AG04449 (cell line): ENCODE measurements at regions of chr3 and their contacts with region 1.

Region 1: DNA sequence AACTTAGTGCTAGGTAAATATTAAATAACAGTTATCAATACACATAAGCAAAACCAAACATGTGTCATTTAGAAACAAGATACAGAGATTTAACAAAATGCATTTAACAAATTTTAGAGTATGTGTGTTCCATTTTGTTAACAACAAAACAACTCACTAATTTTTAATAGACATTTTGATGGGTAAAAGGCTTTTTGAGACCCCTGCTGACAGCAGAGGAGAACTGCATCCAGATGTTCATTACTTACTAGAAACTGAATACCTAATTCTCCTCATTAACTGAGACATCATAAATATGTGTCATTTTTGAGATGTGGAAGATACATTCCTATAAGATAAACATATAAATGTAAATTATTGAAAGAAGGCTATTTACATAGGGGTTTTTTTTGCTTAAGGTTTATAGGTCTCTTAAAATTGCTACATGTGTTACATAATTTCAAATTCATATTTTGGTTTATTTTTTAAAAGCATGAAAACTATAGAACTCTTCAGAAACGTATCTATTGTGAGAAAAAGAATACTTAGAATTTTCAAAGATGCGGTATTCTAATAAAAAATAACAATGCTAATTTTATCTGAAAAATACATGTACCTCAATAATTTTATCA is 1009.8 kb downstream of the TUSC7 start:
- DNase-seq: no peak
- H3K4me3 ChIP-seq: no peak overlapping the region
- CTCF ChIP-seq: peak; percentile 51

Region 2: GRCh38 chr3:117708601-117709000 is 10.8 kb before region 1 on chr3:
- CTCF ChIA-PET with region 1: interaction called, 10 read pairs
- POLR2A ChIA-PET with region 1: no interaction called
- DNase-seq: no peak
- H3K4me3 ChIP-seq: no peak overlapping the region
- CTCF ChIP-seq: no peak

Region 3: DNA sequence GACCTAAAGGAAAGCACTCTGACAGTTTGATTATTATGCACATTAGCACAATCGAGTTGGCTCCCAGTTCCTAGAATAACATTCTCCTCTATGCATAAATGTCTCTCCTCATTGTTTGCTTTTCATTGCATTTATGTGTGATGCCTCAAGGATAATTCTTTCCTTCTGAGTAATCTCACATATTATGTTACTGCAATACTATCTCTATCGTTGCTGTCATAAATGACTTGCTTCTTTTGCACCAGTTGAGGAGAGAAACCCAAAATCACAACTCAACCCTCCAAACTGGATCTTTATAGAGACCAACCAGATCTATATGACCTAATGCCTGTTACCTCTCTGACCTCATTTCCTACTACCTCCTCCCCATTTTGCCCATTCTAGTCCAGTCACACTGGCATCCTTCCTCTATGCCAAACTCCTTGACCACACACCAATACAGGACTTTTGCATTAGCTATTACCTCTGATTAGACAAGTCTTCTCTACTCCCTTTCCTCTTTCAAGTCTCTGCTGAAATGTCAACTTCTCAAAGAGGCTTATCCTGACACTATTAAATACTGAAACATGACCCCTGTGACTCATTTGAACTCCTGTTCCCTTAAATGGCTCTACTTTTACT is 16.2 kb after region 1 on chr3:
- CTCF ChIA-PET with region 1: interaction called, 10 read pairs
- POLR2A ChIA-PET with region 1: no interaction called
- DNase-seq: peak; percentile 70
- H3K4me3 ChIP-seq: no peak overlapping the region
- CTCF ChIP-seq: no peak

Region 4: GRCh38 chr3:117844676-117845075 is 125.3 kb after region 1 on chr3:
- CTCF ChIA-PET with region 1: no interaction called
- POLR2A ChIA-PET with region 1: no interaction called
- DNase-seq: peak; percentile 14
- H3K4me3 ChIP-seq: no peak overlapping the region
- CTCF ChIP-seq: no peak

Region 5: GRCh38 chr3:117873249-117873600 is 153.8 kb after region 1 on chr3:
- CTCF ChIA-PET with region 1: no interaction called
- POLR2A ChIA-PET with region 1: no interaction called
- DNase-seq: no peak
- H3K4me3 ChIP-seq: no peak overlapping the region
- CTCF ChIP-seq: no peak